CD8-positive, alpha-beta memory T cell (primary cell): ENCODE measurements at regions of chr2 and their contacts with region 1.

Region 1: GRCh38 chr2:62456721-62457539 is 49.1 kb downstream of the TMEM17 start:
- DNase-seq: peak; percentile 46 to 71 (median 56)
- H3K4me3 ChIP-seq: peak overlapping the region; percentile 55
- H3K4me3 Mint-ChIP-seq: peak overlapping the region in 6 of 7 donors; percentile 33 to 88 (median 61)
- H3K27ac ChIP-seq: peak overlapping the region; percentile 38
- H3K27ac Mint-ChIP-seq: no peak overlapping the region
- H3K4me1 ChIP-seq: peaks cover 4% of the 10 kb centered on the region
- H3K4me1 Mint-ChIP-seq: peaks cover 0 to 6% (median 0%) of the 10 kb centered on the region in 3 donors
- H3K27me3 ChIP-seq: no peaks in the 10 kb centered on the region
- H3K27me3 Mint-ChIP-seq: peaks cover 0 to 13% of the 10 kb centered on the region in 2 donors

Region 2: GRCh38 chr2:62443886-62444285 is 13.0 kb before region 1 on chr2:
- CTCF ChIA-PET with region 1: interaction called, 34 read pairs
- POLR2A ChIA-PET with region 1: no interaction called
- DNase-seq: no peak
- H3K4me3 ChIP-seq: no peak overlapping the region
- H3K4me3 Mint-ChIP-seq: no peak overlapping the region
- H3K27ac ChIP-seq: no peak overlapping the region
- H3K27ac Mint-ChIP-seq: no peak overlapping the region
- H3K4me1 ChIP-seq: no peaks in the 10 kb centered on the region
- H3K4me1 Mint-ChIP-seq: no peaks in the 10 kb centered on the region
- H3K27me3 ChIP-seq: no peaks in the 10 kb centered on the region
- H3K27me3 Mint-ChIP-seq: peaks cover 0 to 2% of the 10 kb centered on the region in 2 donors

Region 3: GRCh38 chr2:62475172-62476011 is 18.5 kb after region 1 on chr2:
- CTCF ChIA-PET with region 1: interaction called, 12 read pairs
- POLR2A ChIA-PET with region 1: no interaction called
- DNase-seq: peak in 4 of 5 donors; percentile 2 to 49 (median 9)
- H3K4me3 ChIP-seq: peak overlapping the region; percentile 9
- H3K4me3 Mint-ChIP-seq: peak overlapping the region; percentile 57 to 74 (median 69)
- H3K27ac ChIP-seq: no peak overlapping the region
- H3K27ac Mint-ChIP-seq: peak overlapping the region; percentile 52 to 91 (median 72)
- H3K4me1 ChIP-seq: peaks cover 9% of the 10 kb centered on the region
- H3K4me1 Mint-ChIP-seq: peaks cover 19 to 28% (median 21%) of the 10 kb centered on the region in 3 donors
- H3K27me3 ChIP-seq: no peaks in the 10 kb centered on the region
- H3K27me3 Mint-ChIP-seq: peaks cover 0 to 4% of the 10 kb centered on the region in 2 donors

Region 4: DNA sequence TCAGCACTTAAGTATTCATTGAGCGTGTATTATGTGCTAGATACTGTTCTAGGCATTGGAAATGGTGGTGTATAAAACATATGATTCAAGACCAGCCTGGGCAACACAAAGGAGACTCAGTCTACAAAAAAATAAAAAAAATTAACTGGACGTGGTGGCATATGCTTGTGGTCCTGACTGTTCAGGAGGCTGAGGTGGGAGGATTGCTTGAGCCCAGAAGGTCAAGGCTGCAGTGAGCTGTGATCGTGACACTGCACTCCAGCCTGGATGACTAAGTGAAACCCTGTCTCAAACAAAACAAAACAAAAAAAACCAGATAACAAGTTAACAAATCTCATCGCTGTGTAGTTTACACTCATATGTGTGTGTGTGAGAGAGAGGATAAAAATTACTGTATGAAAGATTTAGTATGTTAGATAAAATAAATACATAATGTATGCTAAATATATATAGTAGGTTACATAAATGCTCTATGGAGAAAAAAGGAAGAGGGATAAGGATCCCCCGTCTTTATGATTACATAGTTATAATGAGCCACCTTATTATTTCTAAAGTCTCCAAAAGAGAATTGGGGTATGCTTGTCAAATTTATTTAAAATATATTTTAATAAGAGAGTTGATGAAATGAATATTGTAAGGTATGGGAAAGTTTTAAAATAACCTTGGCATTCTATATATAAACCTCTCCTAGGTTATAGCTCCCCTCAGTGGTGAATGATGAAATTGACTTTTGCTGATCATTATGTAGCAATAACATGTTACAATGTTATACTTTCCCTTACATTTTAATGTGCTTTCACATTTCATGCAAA is 317.8 kb after region 1 on chr2:
- CTCF ChIA-PET with region 1: interaction called, 121 read pairs
- POLR2A ChIA-PET with region 1: interaction called, 3 read pairs
- DNase-seq: peak in 2 of 5 donors; percentile 21 to 30
- H3K4me3 ChIP-seq: no peak overlapping the region
- H3K4me3 Mint-ChIP-seq: no peak overlapping the region
- H3K27ac ChIP-seq: no peak overlapping the region
- H3K27ac Mint-ChIP-seq: peak overlapping the region in 1 of 8 donors; percentile 32
- H3K4me1 ChIP-seq: no peaks in the 10 kb centered on the region
- H3K4me1 Mint-ChIP-seq: peaks cover 4 to 7% (median 4%) of the 10 kb centered on the region in 3 donors
- H3K27me3 ChIP-seq: no peaks in the 10 kb centered on the region
- H3K27me3 Mint-ChIP-seq: no peaks in the 10 kb centered on the region